Right ventricle myocardium inferior (tissue), 1 donor: ENCODE measurements at regions of chr3 and their contacts with region 1.

Region 1: GRCh38 chr3:26712211-26713026 is 89.8 kb downstream of the LRRC3B start:
- DNase-seq: no peak
- ATAC-seq: no peak

Region 2: GRCh38 chr3:25648107-25648535 is 1064.3 kb before region 1 on chr3:
- intact Hi-C with region 1: loop called (anchors 5 kb)
- DNase-seq: no peak
- ATAC-seq: peak; percentile 83